Left ventricle myocardium superior (tissue), 1 donor: ENCODE measurements at regions of chr4 and their contacts with region 1.

Region 1: GRCh38 chr4:83284193-83285054 is at the start of gene COQ2:
- DNase-seq: peak; percentile 97
- ATAC-seq: peak; percentile 98
- total RNA-seq, gene COQ2: 20.0 TPM

Region 2: GRCh38 chr4:83455281-83456129 is 171.1 kb after region 1 on chr4 and contains the starts of genes HELQ and MRPS18C:
- intact Hi-C with region 1: loop called (anchors 10 kb)
- DNase-seq: peak; percentile 94
- ATAC-seq: peak; percentile 99
- total RNA-seq, gene HELQ: 15.3 TPM
- total RNA-seq, gene MRPS18C: 67.1 TPM